ENCODE measurements at regions of chr19 and their contacts with region 1.

Region 1: DNA sequence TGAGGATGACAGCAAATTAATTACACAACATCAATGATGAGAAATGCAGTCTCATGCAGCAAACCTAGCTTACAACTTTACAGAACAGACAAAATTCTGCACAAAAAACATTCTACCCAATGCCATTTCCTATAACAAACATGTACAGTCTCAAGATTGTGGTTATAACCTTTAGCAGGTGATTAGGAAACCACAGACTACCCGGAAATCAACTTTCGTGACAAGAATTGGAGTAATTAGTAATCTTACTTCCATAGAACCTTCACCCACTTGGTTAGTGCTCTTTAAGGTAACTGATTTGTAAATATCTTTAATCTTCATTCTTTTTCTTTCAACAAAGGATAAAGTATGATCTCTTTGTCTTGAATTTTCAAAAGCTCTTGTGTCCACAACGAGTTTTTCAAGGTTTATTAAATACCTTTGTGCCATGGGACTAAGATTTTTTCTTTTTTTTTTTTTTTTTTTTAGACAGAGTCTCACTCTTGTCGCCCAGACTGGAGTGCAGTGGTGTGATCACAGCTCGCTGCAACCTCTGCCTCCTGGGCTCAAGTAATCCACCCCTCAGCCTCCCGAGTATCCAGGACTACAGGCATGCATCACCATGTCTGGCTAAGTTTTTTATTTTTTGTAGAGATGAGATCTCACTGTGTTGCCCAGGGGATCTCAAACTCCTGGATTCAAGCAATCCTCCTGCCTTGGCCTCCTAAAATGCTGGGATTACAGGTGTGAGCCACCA is 78.8 kb downstream of the MAP4K1 start:
- DNase-seq: peak; percentile 58
- H3K4me3 Mint-ChIP-seq: peak overlapping the region; percentile 49
- H3K27ac Mint-ChIP-seq: peak overlapping the region; percentile 91
- H3K4me1 Mint-ChIP-seq: peaks cover 40% of the 10 kb centered on the region
- H3K27me3 Mint-ChIP-seq: no peaks in the 10 kb centered on the region

Region 2: DNA sequence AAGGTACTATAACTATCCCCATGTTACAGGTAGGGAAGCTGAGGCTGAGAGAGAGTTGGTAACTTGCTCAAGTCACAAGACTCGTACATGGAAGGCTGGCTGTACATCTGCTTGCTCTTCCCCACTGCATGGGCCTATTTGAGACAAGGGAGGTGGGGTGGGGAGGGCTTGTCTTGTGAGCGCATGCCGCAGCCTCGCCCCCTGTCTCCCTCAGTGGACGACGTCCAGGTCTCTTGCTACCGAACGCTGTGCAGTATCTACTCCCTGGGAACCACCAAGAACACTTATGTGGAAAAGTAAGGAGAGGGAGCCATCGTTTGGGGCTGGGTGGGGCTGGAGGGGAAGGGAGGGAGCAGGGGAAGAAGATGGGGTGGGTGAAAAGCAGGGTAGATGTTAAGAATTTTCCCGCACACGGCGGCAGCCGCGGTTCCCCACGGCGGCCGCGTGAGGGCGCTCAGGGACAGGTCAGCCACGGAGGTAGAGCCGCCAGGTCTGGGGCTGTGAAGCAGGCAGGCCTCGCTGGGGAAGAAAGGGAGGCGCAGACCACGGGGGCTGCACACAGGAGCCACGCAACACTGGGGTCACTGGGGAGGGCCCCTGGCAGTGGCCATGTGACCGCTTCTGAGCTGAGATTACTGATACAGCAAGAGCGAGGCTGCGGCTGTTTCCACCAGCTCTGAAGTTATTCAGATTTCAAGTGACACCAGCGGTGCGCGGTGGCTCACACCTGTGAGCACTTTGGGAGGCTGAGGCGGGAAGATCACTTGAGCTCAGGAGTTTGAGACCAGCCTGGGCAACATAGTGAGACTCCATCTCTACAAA is 23.9 kb before region 1 on chr19:
- CTCF ChIA-PET with region 1: interaction called, 5 read pairs
- POLR2A ChIA-PET with region 1: no interaction called
- intact Hi-C with region 1: loop called (anchors 2 kb)
- DNase-seq: peak; percentile 86
- H3K4me3 Mint-ChIP-seq: no peak overlapping the region
- H3K27ac Mint-ChIP-seq: peak overlapping the region; percentile 33
- H3K4me1 Mint-ChIP-seq: peaks cover 22% of the 10 kb centered on the region
- H3K27me3 Mint-ChIP-seq: no peaks in the 10 kb centered on the region

Region 3: DNA sequence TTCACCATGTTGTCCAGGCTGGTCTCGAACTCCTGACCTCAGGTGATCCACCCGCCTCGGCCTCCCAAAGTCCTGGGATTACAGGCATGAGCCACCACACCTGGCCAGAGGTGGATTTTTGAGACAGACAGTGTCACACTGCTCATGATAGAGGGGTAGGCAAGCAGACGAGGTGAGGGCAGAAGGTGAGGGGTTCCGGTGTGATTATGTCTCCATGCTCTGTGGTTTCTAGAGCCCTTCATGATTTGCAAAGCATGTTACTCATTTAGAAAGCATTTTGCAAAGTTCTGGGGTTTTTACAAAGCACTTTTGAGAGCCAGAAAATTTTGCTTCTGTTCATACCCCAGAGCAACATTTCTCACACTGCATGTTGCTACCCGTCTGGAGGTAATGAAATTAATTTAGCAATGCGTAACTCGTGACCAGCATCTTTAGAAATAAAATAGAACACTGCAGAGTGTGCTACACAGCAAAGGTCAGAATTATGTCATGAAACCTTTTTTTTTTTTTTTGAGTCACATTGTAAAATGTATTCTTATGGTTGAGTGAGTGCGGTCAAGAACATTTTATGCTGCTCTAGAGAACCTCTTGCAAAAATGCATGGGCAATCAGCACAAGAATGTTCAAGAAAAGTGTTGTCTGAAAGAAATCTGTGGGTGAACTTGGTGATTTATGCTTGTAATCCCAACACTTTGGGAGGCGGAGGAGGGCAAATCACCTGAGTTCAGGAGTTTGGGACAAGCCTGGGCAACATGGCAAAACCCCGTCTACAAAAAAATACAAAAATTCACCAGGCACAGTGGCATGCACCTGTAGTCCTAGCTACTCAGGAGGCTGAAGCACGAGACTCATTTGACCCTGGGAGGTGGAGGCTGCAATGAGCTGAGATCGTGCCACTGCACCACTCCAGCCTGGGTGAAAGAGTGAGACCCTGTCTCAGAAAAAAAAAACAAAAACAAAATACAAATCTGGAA is 20.8 kb after region 1 on chr19:
- CTCF ChIA-PET with region 1: interaction called, 3 read pairs
- POLR2A ChIA-PET with region 1: no interaction called
- intact Hi-C with region 1: loop called (anchors 1 kb)
- DNase-seq: peak; percentile 77
- H3K4me3 Mint-ChIP-seq: peak overlapping the region; percentile 49
- H3K27ac Mint-ChIP-seq: peak overlapping the region; percentile 88
- H3K4me1 Mint-ChIP-seq: peaks cover 58% of the 10 kb centered on the region
- H3K27me3 Mint-ChIP-seq: peaks cover 3% of the 10 kb centered on the region

Measured in activated CD4-positive, alpha-beta memory T cell treated with anti-CD3 and anti-CD28 coated beads for 36 hours (primary cell).